ENCODE measurements at regions of chr2 and their contacts with region 1.

Region 1: GRCh38 chr2:59301466-59302402 is 1060.6 kb upstream of the FANCL start:
- DNase-seq: no peak
- ATAC-seq: peak; percentile 57 to 82 (median 65)
- H3K4me3 ChIP-seq: no peak overlapping the region
- H3K27ac ChIP-seq: no peak overlapping the region
- H3K4me1 ChIP-seq: no peaks in the 10 kb centered on the region
- H3K27me3 ChIP-seq: no peaks in the 10 kb centered on the region
- CTCF ChIP-seq: peak; percentile 66

Region 2: GRCh38 chr2:60152226-60152833 is 850.6 kb after region 1 on chr2:
- intact Hi-C with region 1: loop called in 1 of 2 experiments (anchors 5 kb)
- DNase-seq: no peak
- ATAC-seq: no peak
- H3K4me3 ChIP-seq: no peak overlapping the region
- H3K27ac ChIP-seq: no peak overlapping the region
- H3K4me1 ChIP-seq: no peaks in the 10 kb centered on the region
- H3K27me3 ChIP-seq: no peaks in the 10 kb centered on the region
- CTCF ChIP-seq: peak; percentile 74

Measured in psoas muscle (tissue), 8 donors.